GM12878 (cell line): ENCODE measurements at regions of chr4 and their contacts with region 1.

Region 1: DNA sequence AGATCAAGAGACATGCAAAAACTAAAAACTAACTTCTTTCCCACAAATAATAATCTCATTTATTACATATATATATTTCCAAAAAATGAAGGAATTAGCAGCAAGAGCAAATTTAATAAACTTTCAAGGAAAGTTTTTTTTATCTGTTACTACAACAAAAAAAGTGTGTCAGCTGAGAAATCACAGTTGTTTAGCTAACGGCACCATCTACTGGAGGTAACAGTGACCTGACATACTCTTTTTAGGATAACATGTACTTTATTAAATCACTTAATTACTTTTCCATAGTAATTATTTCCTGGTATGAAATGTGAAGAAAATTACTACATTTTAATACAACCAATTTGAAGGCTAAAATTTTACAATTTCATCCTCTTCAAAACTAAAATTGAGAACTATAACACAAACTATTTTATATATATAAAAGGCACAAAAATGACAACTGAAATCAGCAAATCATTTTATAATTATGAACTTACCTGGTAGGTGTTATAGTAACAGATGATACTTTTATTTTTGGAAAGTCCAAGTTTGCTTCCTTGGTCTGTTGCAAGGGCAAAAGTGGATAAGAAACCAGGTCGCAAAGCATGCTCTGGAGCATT is 9.1 kb downstream of the LAMTOR3 start:
- DNase-seq: no peak
- ATAC-seq: peak; percentile 80
- H3K4me3 ChIP-seq: no peak overlapping the region
- H3K27ac ChIP-seq: no peak overlapping the region
- H3K4me1 ChIP-seq: no peaks in the 10 kb centered on the region
- H3K27me3 ChIP-seq: no peaks in the 10 kb centered on the region
- CTCF ChIP-seq: peak; percentile 47 to 75 (median 49); a peak in 4 of 6 replicates
- EP300 ChIP-seq: no peak
- POLR2A ChIP-seq: no peak
- RAD21 ChIP-seq: peak; percentile 85

Region 2: GRCh38 chr4:99563310-99564186 is 321.6 kb before region 1 on chr4 and contains the start of gene TRMT10A:
- CTCF ChIA-PET with region 1: interaction called, 12 read pairs
- POLR2A ChIA-PET with region 1: interaction called, 3 read pairs
- RAD21 ChIA-PET with region 1: interaction called, 7 read pairs
- SMC1A ChIA-PET with region 1: interaction called, 12 read pairs
- in situ Hi-C with region 1: loop called (anchors 5 kb)
- intact Hi-C with region 1: loop called (anchors 1 kb)
- DNase-seq: peak; percentile 85
- ATAC-seq: peak; percentile 95
- H3K4me3 ChIP-seq: peak within 1 kb of the TSS; percentile 93
- H3K27ac ChIP-seq: peak within 1 kb of the TSS; percentile 97
- H3K4me1 ChIP-seq: no peaks in the 10 kb centered on the region
- H3K27me3 ChIP-seq: no peaks in the 10 kb centered on the region
- CTCF ChIP-seq: no peak
- EP300 ChIP-seq: no peak
- POLR2A ChIP-seq: peak; percentile 81
- RAD21 ChIP-seq: no peak
- polyA plus RNA-seq, gene TRMT10A: 8.8 to 9.6 TPM

Region 3: DNA sequence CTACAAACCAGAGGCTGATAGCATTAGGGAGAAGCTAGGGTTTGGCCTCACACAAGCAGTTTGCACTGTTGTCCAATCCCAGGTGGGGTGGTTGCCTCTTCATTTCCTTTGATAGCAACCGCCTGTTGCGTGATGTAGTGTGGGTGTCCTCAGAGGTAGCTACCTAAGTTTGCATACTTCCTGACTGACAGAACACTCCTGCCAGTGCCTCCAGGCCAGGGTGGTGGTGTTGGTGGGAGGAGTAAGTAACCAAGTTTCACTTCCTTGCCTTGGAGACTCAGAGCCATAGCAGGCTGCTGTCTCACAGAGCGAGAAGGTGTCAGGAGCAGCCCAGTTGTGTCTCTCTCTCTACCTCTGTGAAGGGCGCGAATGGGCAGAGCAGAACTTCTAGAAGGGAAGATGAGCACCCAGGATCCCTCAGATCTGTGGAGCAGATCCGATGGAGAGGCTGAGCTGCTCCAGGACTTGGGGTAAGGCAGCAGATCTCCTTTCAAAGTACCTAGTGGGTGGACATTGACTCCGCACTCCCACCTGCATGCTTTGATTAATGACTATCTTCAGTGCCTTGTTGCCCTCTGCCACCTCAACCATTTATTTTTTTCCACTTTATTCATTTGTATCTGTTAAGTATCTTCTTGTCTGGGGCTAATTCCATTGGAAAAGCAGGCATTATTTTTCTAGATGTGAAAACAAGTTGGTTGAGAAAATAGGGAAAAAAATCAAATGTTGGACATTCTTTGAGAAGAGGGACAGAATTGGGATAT is 68.4 kb before region 1 on chr4 and contains the start of gene DAPP1:
- CTCF ChIA-PET with region 1: interaction called, 167 read pairs
- POLR2A ChIA-PET with region 1: interaction called, 6 read pairs
- RAD21 ChIA-PET with region 1: interaction called, 98 read pairs
- SMC1A ChIA-PET with region 1: interaction called, 75 read pairs
- in situ Hi-C with region 1: no loop called
- intact Hi-C with region 1: loop called (anchors 1 kb)
- DNase-seq: peak; percentile 94
- ATAC-seq: peak; percentile 88
- H3K4me3 ChIP-seq: peak within 1 kb of the TSS; percentile 95
- H3K27ac ChIP-seq: peak within 1 kb of the TSS; percentile 85
- H3K4me1 ChIP-seq: peaks cover 19% of the 10 kb centered on the region
- H3K27me3 ChIP-seq: no peaks in the 10 kb centered on the region
- CTCF ChIP-seq: no peak
- EP300 ChIP-seq: peak; percentile 65 to 71; a peak in 3 of 4 replicates
- POLR2A ChIP-seq: peak; percentile 98
- RAD21 ChIP-seq: no peak
- polyA plus RNA-seq, gene DAPP1: 104 to 147 TPM

Region 4: GRCh38 chr4:99827454-99827853 is 57.7 kb before region 1 on chr4:
- CTCF ChIA-PET with region 1: interaction called, 6 read pairs
- POLR2A ChIA-PET with region 1: no interaction called
- RAD21 ChIA-PET with region 1: interaction called, 5 read pairs
- SMC1A ChIA-PET with region 1: interaction called, 12 read pairs
- in situ Hi-C with region 1: no loop called
- intact Hi-C with region 1: no loop called
- DNase-seq: no peak
- ATAC-seq: peak; percentile 3; the same call in 1 of the 3 replicates
- H3K4me3 ChIP-seq: no peak overlapping the region
- H3K27ac ChIP-seq: no peak overlapping the region
- H3K4me1 ChIP-seq: peaks cover 9% of the 10 kb centered on the region; the same call in 1 of the 2 replicates
- H3K27me3 ChIP-seq: no peaks in the 10 kb centered on the region
- CTCF ChIP-seq: no peak
- EP300 ChIP-seq: no peak
- POLR2A ChIP-seq: no peak
- RAD21 ChIP-seq: no peak

Region 5: DNA sequence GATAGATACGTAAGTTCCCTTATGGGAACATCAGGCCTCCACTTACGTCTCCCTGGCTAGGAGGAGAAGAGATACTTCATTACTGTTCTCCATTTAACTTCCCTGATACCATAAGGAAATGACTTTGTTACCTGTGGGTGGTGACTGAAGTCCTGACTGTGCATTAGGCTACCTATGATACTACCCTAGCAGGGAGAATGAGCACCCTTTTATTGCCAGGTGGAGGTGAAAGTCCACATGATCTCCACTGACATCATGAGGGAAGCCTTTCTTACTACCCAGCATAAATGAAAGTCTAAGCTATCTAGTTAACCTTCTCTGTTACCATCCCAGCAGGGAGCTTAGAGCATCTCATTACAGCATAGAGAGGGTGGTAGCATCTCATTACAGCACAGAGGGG is 33.5 kb after region 1 on chr4:
- CTCF ChIA-PET with region 1: no interaction called
- POLR2A ChIA-PET with region 1: no interaction called
- RAD21 ChIA-PET with region 1: no interaction called
- SMC1A ChIA-PET with region 1: no interaction called
- in situ Hi-C with region 1: no loop called
- intact Hi-C with region 1: no loop called
- DNase-seq: no peak
- ATAC-seq: no peak
- H3K4me3 ChIP-seq: no peak overlapping the region
- H3K27ac ChIP-seq: no peak overlapping the region
- H3K4me1 ChIP-seq: no peaks in the 10 kb centered on the region
- H3K27me3 ChIP-seq: no peaks in the 10 kb centered on the region
- CTCF ChIP-seq: no peak
- EP300 ChIP-seq: no peak
- POLR2A ChIP-seq: no peak
- RAD21 ChIP-seq: no peak

Region 6: GRCh38 chr4:100060765-100061416 is 175.7 kb after region 1 on chr4:
- CTCF ChIA-PET with region 1: no interaction called
- POLR2A ChIA-PET with region 1: no interaction called
- RAD21 ChIA-PET with region 1: no interaction called
- SMC1A ChIA-PET with region 1: no interaction called
- in situ Hi-C with region 1: no loop called
- intact Hi-C with region 1: loop called (anchors 5 kb)
- DNase-seq: no peak
- ATAC-seq: peak; percentile 83
- H3K4me3 ChIP-seq: no peak overlapping the region
- H3K27ac ChIP-seq: no peak overlapping the region
- H3K4me1 ChIP-seq: no peaks in the 10 kb centered on the region
- H3K27me3 ChIP-seq: no peaks in the 10 kb centered on the region
- CTCF ChIP-seq: no peak
- EP300 ChIP-seq: no peak
- POLR2A ChIP-seq: no peak
- RAD21 ChIP-seq: no peak